CD14-positive monocyte (primary cell): ENCODE measurements at regions of chr22 and their contacts with region 1.

Region 1: DNA sequence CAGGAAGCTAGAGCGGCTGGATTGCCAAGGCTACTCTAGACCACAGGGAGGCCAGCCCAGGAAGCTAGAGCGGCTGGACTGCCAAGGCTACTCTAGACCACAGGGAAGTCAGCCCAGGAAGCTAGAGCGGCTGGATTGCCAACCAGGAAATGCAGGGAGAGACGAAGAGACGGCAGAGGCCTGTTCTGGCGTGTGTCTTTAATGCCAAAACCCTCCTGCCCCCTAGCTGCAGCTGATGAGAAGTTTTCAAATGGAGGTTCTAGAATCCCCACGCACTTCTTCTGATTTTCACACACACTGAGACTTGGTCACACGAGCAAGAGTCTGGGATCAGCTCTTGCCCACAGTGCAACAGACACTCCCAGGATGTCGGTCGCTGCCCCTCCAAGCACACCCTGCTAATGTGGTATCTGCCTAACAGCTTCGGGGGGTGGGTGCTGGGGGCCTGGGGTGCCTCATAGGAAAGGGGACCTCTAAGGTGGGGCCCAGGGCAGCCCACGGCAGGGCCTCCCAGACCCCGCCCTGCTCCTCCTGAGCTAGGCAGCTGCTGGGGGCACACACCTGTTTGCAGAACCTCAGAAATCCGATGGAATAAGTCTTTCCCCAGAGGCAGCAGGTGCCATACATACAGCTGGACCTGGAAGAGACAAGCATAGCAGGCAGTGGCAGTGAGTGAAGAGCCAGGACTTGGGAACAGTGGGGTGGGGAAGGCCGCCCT is 28.5 kb downstream of the MAFF start:
- DNase-seq: peak; percentile 67 to 74 (median 69)
- H3K4me3 ChIP-seq: no peak overlapping the region
- H3K4me3 Mint-ChIP-seq: no peak overlapping the region
- H3K27ac ChIP-seq: peak overlapping the region in 1 of 2 donors; percentile 43
- H3K27ac Mint-ChIP-seq: peak overlapping the region in 6 of 7 donors; percentile 8 to 73 (median 32)
- H3K4me1 ChIP-seq: peaks cover 11 to 29% of the 10 kb centered on the region in 2 donors
- H3K4me1 Mint-ChIP-seq: peaks cover 21% of the 10 kb centered on the region
- H3K27me3 ChIP-seq: no peaks in the 10 kb centered on the region
- H3K27me3 Mint-ChIP-seq: peaks cover 0 to 2% (median 0%) of the 10 kb centered on the region in 3 donors
- CTCF ChIP-seq: peak; percentile 64

Region 2: GRCh38 chr22:38056969-38057891 is 173.0 kb before region 1 on chr22 and contains the start of gene PICK1:
- intact Hi-C with region 1: loop called in 1 of 2 experiments (anchors 5 kb)
- DNase-seq: peak; percentile 64 to 82 (median 80)
- H3K4me3 ChIP-seq: peak within 1 kb of the TSS; percentile 69 to 85 (median 70)
- H3K4me3 Mint-ChIP-seq: peak within 1 kb of the TSS; percentile 92 to 97
- H3K27ac ChIP-seq: peak within 1 kb of the TSS; percentile 78 to 88
- H3K27ac Mint-ChIP-seq: peak within 1 kb of the TSS; percentile 91 to 99 (median 97)
- H3K4me1 ChIP-seq: peaks cover 12 to 16% of the 10 kb centered on the region in 2 donors
- H3K4me1 Mint-ChIP-seq: peaks cover 17% of the 10 kb centered on the region
- H3K27me3 ChIP-seq: no peaks in the 10 kb centered on the region
- H3K27me3 Mint-ChIP-seq: peaks cover 11 to 18% (median 17%) of the 10 kb centered on the region in 3 donors
- CTCF ChIP-seq: no peak
- polyA plus RNA-seq, gene PICK1: 6.4 to 16.9 (median 7.2) TPM

Region 3: GRCh38 chr22:38114484-38115398 is 115.5 kb before region 1 on chr22:
- intact Hi-C with region 1: loop called (anchors 2 to 5 kb)
- DNase-seq: peak; percentile 67 to 77 (median 73)
- H3K4me3 ChIP-seq: no peak overlapping the region
- H3K4me3 Mint-ChIP-seq: no peak overlapping the region
- H3K27ac ChIP-seq: no peak overlapping the region
- H3K27ac Mint-ChIP-seq: no peak overlapping the region
- H3K4me1 ChIP-seq: no peaks in the 10 kb centered on the region
- H3K4me1 Mint-ChIP-seq: no peaks in the 10 kb centered on the region
- H3K27me3 ChIP-seq: no peaks in the 10 kb centered on the region
- H3K27me3 Mint-ChIP-seq: peaks cover 1% of the 10 kb centered on the region in 3 donors
- CTCF ChIP-seq: peak; percentile 87